Heart left ventricle (tissue), 16 donors: ENCODE measurements at regions of chr1 and their contacts with region 1.

Region 1: DNA sequence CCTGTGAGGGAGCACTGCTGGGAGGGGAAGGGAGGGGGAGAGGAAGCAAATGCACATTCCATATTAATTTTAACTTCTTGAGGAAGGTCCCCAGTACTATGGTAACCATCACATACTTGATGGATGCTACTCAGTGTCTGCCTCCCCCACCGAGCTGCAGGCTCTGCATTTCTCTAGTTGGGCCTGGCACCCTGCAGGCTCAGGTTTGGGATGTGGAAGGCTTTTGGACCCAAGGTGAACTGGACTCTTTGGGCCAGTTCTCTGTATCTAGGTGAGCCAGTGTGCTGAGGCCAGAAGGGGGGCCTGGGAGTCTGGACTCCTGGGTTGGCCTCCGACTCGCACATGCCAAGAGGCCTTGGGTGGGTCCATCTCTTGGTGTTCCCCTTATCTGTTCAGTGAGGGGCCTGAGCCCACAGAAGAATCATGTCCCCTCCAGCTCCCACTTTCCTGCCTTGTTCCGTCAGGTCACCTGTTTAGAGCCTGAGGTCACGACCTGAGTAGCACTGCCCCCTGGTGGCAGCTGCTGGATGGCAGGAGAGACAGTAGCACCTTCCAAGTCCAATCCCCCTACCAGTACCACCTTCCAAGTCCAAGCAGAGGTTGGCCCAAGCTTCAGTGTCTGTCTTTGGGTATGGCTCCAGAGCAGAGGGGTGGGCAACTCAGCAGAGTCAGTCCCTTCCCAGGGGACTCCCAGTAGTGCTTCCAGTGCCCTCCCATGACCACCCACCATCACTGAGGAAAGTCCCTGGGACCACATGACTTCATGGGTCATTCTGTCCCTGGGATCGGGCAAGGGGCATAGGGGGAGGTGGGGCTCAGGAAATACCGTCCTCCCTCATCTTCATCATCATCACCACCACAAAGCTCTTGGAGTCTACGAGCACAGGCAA is 241.8 kb downstream of the TRABD2B start:
- DNase-seq: no peak
- ATAC-seq: no peak
- H3K4me3 ChIP-seq: no peak overlapping the region
- H3K27ac ChIP-seq: no peak overlapping the region
- H3K4me1 ChIP-seq: peaks cover 0 to 11% (median 0%) of the 10 kb centered on the region in 12 donors
- H3K27me3 ChIP-seq: peaks cover 0 to 6% (median 0%) of the 10 kb centered on the region in 9 donors
- CTCF ChIP-seq: peak in 10 of 12 donors; percentile 9 to 61 (median 30)
- POLR2A ChIP-seq: no peak

Region 2: GRCh38 chr1:47776667-47777131 is 21.4 kb after region 1 on chr1:
- intact Hi-C with region 1: no loop called
- DNase-seq: no peak
- ATAC-seq: no peak
- H3K4me3 ChIP-seq: no peak overlapping the region
- H3K27ac ChIP-seq: no peak overlapping the region
- H3K4me1 ChIP-seq: peaks cover 0 to 13% (median 0%) of the 10 kb centered on the region in 12 donors
- H3K27me3 ChIP-seq: no peaks in the 10 kb centered on the region
- CTCF ChIP-seq: no peak
- POLR2A ChIP-seq: no peak

Region 3: GRCh38 chr1:47809301-47810084 is 54.1 kb after region 1 on chr1:
- intact Hi-C with region 1: loop called in 1 of 10 experiments (anchors 10 kb)
- DNase-seq: no peak
- ATAC-seq: no peak
- H3K4me3 ChIP-seq: no peak overlapping the region
- H3K27ac ChIP-seq: no peak overlapping the region
- H3K4me1 ChIP-seq: peaks cover 0 to 20% (median 6%) of the 10 kb centered on the region in 12 donors
- H3K27me3 ChIP-seq: no peaks in the 10 kb centered on the region
- CTCF ChIP-seq: no peak
- POLR2A ChIP-seq: no peak

Region 4: DNA sequence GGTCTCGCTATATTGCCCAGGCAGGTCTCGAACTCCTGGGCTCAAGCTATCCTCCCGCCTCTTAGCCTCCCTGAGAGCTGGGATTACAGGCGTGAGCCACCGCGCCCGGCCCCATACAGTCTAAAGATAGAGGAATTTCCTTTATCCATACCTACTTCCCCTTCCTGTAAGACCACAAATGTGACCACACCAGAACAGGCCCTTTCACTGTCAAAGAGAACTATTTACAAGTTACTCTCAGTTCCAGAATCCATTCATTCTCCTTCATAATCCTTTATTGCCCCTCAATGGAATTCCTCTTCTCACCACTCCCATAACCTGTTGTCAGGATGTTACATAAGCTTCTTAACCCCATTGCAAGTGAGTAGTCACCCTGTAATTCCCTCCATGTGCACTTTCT is 440.9 kb after region 1 on chr1:
- intact Hi-C with region 1: no loop called
- DNase-seq: no peak
- ATAC-seq: no peak
- H3K4me3 ChIP-seq: no peak overlapping the region
- H3K27ac ChIP-seq: no peak overlapping the region
- H3K4me1 ChIP-seq: peaks cover 0 to 4% (median 0%) of the 10 kb centered on the region in 12 donors
- H3K27me3 ChIP-seq: peaks cover 0 to 13% (median 0%) of the 10 kb centered on the region in 9 donors
- CTCF ChIP-seq: no peak
- POLR2A ChIP-seq: no peak